Activated CD8-positive, alpha-beta memory T cell treated with anti-CD3 and anti-CD28 coated beads, Interleukin-2, amount 10 ng/mL, durations not matched to agents 7 days and 5 days (primary cell): ENCODE measurements at regions of chr2 and their contacts with region 1.

Region 1: DNA sequence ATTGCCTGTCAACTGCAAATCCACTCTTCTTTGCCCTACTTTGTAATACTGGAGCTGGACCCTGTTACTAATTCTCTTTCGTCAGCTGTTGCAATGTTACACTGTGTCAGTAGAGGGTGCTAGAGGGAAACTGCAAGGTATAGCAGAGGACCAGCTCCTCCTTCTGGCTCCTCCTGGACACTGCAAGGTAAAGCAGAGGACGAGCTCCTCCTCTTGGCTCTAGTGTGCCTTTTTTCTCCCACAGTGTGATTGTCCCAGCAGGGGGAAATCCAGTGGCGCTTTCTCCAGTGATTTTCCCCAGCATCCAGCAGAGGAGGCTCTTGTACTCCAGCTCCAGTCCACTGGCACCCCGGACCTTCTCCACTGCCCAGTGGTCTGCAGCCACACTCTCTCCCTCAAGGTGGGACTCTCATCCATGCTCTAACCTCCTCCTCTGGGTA is 95.6 kb downstream of the CAPN13 start:
- DNase-seq: peak; percentile 94
- ATAC-seq: peak; percentile 79
- H3K4me3 Mint-ChIP-seq: no peak overlapping the region
- H3K27ac Mint-ChIP-seq: no peak overlapping the region
- H3K4me1 Mint-ChIP-seq: peaks cover 14% of the 10 kb centered on the region
- H3K27me3 Mint-ChIP-seq: peaks cover 7% of the 10 kb centered on the region

Region 2: GRCh38 chr2:30139131-30139870 is 572.4 kb before region 1 on chr2:
- CTCF ChIA-PET with region 1: interaction called, 12 read pairs
- DNase-seq: no peak
- ATAC-seq: peak; percentile 59
- H3K4me3 Mint-ChIP-seq: no peak overlapping the region
- H3K27ac Mint-ChIP-seq: peak overlapping the region; percentile 13
- H3K4me1 Mint-ChIP-seq: peaks cover 11% of the 10 kb centered on the region
- H3K27me3 Mint-ChIP-seq: peaks cover 12% of the 10 kb centered on the region

Region 3: DNA sequence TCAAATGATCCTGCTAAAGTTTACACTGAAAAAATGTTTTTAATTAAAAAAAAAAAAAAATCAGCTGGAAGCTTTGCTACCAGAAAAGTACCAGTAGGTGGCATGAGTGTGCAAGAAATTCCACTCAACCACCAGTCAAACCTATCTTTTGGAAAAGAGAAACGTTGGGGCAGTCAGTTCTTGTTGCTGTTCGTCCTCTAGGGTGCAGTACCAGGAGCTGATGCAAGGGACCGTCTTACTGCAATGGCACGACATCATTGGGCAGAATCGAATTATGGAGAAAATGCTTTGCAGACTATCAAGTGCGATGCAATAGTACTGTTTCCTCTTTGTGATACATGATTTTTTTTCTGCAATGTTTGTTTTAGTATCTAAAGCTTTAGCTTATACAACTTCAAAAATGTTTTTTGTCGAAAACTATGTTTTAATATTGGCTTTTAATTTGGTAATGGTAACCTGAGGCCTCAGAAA is 546.6 kb before region 1 on chr2:
- CTCF ChIA-PET with region 1: interaction called, 397 read pairs
- DNase-seq: peak; percentile 81
- ATAC-seq: peak; percentile 94
- H3K4me3 Mint-ChIP-seq: no peak overlapping the region
- H3K27ac Mint-ChIP-seq: no peak overlapping the region
- H3K4me1 Mint-ChIP-seq: peaks cover 13% of the 10 kb centered on the region
- H3K27me3 Mint-ChIP-seq: no peaks in the 10 kb centered on the region

Region 4: DNA sequence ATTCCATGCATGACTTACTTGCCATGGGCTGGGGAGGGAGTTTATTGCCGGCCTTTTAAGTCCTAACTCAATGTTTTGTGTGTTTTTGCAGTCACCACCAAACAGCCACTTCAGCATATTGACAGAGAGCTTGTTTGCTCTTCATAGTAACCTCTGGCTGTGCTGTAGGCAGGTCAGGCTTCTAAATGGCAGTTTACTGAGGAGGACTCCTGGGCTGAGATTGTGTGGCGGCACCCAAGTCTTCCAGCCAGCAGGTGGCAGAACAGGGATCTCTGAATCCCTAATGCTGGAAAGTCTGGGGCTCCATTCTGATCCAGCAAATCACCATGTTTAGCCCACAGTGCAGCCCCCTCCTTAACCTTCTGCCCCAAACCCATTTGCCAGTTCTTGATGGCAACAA is 25.7 kb before region 1 on chr2:
- CTCF ChIA-PET with region 1: interaction called, 28 read pairs
- DNase-seq: peak; percentile 34
- ATAC-seq: no peak
- H3K4me3 Mint-ChIP-seq: no peak overlapping the region
- H3K27ac Mint-ChIP-seq: no peak overlapping the region
- H3K4me1 Mint-ChIP-seq: no peaks in the 10 kb centered on the region
- H3K27me3 Mint-ChIP-seq: no peaks in the 10 kb centered on the region

Region 5: GRCh38 chr2:30738164-30738911 is 26.7 kb after region 1 on chr2:
- CTCF ChIA-PET with region 1: no interaction called
- DNase-seq: no peak
- ATAC-seq: no peak
- H3K4me3 Mint-ChIP-seq: no peak overlapping the region
- H3K27ac Mint-ChIP-seq: no peak overlapping the region
- H3K4me1 Mint-ChIP-seq: no peaks in the 10 kb centered on the region
- H3K27me3 Mint-ChIP-seq: peaks cover 6% of the 10 kb centered on the region

Region 6: DNA sequence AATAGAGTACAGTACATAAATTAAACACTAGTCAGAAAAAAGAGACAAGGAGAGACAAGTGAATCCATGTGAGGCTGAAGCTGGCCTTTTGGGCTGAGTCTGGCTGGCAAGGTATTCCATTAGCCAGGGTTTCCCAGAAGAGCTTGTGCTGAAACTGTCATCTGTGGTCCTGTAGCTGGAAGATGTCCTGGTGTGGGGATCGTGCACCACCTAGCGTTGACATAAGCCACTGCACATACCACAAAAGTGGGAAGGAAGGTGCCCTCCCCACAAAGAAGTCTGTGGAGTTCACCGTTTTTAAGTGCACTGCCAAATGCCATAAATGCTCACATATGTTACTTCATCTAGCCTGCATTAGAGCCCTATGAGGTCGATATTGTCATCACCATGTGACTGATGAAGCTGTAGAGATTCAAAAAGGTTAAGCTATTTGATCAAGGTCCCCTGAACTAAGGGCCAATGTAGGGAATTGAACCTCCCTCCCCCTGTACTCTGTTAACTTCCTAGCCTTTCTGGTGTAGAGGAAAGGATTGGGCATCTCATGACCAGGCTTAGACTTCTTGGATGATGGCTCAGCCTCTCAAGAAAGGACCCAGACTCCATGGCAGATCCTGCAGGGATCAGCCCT is 458.5 kb after region 1 on chr2:
- CTCF ChIA-PET with region 1: interaction called, 64 read pairs
- DNase-seq: peak; percentile 68
- ATAC-seq: peak; percentile 86
- H3K4me3 Mint-ChIP-seq: no peak overlapping the region
- H3K27ac Mint-ChIP-seq: no peak overlapping the region
- H3K4me1 Mint-ChIP-seq: peaks cover 4% of the 10 kb centered on the region
- H3K27me3 Mint-ChIP-seq: peaks cover 4% of the 10 kb centered on the region